Posterior vena cava (tissue), 2 donors: ENCODE measurements at regions of chr10 and their contacts with region 1.

Region 1: DNA sequence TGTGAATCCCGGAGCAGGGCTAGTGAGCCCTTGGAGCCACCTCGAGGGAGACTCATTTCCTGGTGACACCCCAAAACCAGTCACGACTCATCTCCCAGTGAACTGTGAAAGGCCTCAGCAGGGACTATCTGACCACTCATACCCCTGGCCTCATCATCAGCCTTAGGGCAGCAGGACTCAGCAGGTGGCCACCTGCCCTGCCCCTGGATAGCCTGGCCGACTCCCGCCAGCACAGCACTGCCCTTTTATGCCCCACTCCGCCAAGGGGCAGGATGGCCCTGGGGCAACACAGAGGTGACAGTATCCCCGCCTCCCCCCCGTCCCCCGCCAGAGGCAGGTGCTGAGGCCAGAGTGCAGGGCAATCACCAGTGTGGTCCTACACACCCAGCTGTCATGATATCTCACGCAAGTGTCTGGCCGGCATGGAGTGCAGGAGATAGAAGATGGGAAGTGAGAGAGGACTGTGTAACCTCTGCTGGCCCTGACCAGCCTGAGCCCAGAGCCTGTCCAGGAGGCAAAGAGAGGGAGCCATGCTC is 3.2 kb downstream of the SNCG start:
- DNase-seq: peak; percentile 76

Region 2: GRCh38 chr10:86918022-86918471 is 43.6 kb before region 1 on chr10:
- intact Hi-C with region 1: no loop called
- DNase-seq: no peak

Region 3: GRCh38 chr10:86941977-86942442 is 19.6 kb before region 1 on chr10:
- intact Hi-C with region 1: loop called in 1 of 2 experiments (anchors 2 kb)
- DNase-seq: no peak

Region 4: DNA sequence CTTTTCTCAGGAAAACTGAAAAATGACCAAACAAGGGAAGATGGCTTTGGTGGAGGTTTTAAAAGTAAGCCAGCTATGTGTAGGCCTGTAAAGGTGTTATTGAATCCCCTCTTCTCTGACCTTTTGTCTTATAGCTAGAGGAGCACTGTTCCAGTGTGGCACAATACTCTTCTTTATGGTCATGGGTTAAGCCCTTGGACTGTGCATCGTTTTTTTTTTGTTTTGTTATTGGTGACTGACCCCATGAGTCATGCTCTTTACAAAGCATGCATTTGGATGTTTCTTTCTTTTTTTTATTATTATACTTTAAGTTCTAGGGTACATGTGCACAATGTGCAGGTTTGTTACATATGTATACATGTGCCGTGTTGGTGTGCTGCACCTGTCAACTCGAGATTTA is 38.9 kb after region 1 on chr10:
- intact Hi-C with region 1: loop called in 1 of 2 experiments (anchors 1 kb)
- DNase-seq: no peak

Region 5: DNA sequence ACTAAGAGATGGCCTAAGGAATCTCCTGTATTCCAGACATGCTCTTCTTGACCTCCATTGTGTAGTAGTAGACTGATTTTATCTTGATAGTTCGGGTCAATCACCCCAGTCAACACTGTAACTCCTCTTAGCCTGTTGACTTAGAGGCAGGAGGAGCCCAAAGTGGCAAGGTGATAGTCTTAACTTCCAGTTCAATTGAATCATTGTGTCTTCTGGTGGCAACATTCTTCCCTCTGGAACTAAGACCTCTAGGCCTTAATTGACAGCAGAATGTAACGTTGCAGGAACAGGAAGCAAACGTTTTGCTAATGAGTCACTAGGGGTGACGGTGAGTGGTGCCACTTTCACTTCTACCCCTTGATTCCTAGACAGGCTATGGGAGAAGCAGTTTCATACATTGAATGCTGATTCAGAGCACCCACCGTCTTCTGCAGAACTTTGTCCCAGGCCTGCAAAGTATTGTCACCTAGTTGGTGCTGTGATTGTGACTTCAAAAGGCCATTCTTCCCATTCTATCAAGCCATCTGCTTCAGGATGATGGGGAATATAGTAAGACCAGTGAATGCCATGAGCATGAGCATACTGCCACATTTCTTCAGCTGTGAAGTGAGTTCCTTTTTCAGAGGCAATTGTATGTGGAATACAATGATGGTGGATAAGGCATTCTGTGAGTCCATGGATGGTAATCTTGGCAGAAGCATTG is 674.1 kb after region 1 on chr10:
- intact Hi-C with region 1: no loop called
- DNase-seq: no peak